H1 (cell line): ENCODE measurements at regions of chr2 and their contacts with region 1.

Region 1: GRCh38 chr2:11904029-11904428 is 157.6 kb downstream of the LPIN1 start:
- DNase-seq: no peak
- H3K4me3 ChIP-seq: no peak overlapping the region
- H3K27ac ChIP-seq: no peak overlapping the region
- H3K4me1 ChIP-seq: no peaks in the 10 kb centered on the region
- H3K27me3 ChIP-seq: no peaks in the 10 kb centered on the region
- CTCF ChIP-seq: no peak
- EP300 ChIP-seq: no peak
- POLR2A ChIP-seq: no peak
- RAD21 ChIP-seq: peak in 1 of 2 experiments; percentile 17; a peak in 1 of 4 replicates

Region 2: DNA sequence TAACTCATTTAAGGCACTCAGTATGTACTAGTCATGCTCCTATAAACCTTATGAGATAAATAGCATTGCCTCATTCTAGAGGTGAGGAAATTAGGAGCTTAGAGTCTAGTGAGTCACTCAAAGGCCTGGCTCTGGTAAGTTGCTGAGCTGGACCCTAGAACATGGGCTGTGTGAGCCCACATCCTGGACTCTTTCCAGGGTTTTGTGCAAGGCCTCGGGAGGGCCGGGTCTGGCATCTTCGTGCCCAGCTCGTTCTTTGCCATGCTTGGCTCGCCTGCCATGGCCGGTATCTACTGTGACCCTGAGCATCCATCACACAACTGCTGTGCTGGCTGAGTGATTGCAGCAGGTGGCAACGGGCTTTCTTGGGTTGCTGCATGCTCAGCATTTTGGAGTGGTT is 10.4 kb after region 1 on chr2:
- CTCF ChIA-PET with region 1: interaction called, 10 read pairs
- POLR2A ChIA-PET with region 1: no interaction called
- DNase-seq: no peak
- H3K4me3 ChIP-seq: no peak overlapping the region
- H3K27ac ChIP-seq: no peak overlapping the region
- H3K4me1 ChIP-seq: no peaks in the 10 kb centered on the region
- H3K27me3 ChIP-seq: no peaks in the 10 kb centered on the region
- CTCF ChIP-seq: no peak
- EP300 ChIP-seq: no peak
- POLR2A ChIP-seq: no peak
- RAD21 ChIP-seq: no peak

Region 3: DNA sequence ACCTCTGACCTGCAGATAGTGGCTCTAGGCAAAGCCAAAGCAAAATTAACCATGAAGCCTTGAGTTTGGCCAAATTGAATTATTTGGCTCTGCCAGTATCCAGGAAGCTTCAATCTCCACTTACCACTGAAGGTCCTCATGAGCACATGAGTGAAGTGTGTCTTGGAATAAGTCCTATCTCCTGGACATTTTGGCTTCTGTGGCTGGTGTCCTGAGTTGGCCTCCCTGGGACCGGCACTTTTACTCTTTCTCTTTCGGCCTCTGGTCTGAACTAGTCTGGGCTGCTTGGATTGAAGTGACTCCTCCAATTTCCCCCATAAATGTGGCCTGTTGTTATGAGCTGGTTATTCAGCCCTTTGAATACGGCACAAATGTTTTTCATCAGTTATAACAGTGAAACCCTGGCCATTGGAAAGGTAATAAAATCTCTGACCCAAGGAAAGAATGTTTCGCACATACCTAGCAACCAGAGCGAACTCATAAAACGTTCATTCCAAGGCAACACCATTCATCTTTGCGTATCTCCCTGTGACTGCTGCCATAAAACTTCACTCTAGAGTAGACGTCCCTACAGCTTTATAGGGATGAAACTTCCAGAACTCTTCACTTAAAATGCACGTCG is 58.8 kb after region 1 on chr2:
- CTCF ChIA-PET with region 1: no interaction called
- POLR2A ChIA-PET with region 1: no interaction called
- DNase-seq: no peak
- H3K4me3 ChIP-seq: no peak overlapping the region
- H3K27ac ChIP-seq: no peak overlapping the region
- H3K4me1 ChIP-seq: no peaks in the 10 kb centered on the region
- H3K27me3 ChIP-seq: no peaks in the 10 kb centered on the region
- CTCF ChIP-seq: no peak
- EP300 ChIP-seq: no peak
- POLR2A ChIP-seq: no peak
- RAD21 ChIP-seq: no peak

Region 4: GRCh38 chr2:12071318-12071717 is 167.3 kb after region 1 on chr2:
- CTCF ChIA-PET with region 1: no interaction called
- POLR2A ChIA-PET with region 1: no interaction called
- DNase-seq: no peak
- H3K4me3 ChIP-seq: no peak overlapping the region
- H3K27ac ChIP-seq: no peak overlapping the region
- H3K4me1 ChIP-seq: no peaks in the 10 kb centered on the region
- H3K27me3 ChIP-seq: no peaks in the 10 kb centered on the region
- CTCF ChIP-seq: no peak
- EP300 ChIP-seq: no peak
- POLR2A ChIP-seq: no peak
- RAD21 ChIP-seq: no peak